Right ventricle myocardium inferior (tissue), 1 donor: ENCODE measurements at regions of chr16 and their contacts with region 1.

Region 1: GRCh38 chr16:56191156-56191815 is at the start of gene GNAO1:
- DNase-seq: peak; percentile 84
- ATAC-seq: peak; percentile 80
- total RNA-seq, gene GNAO1: 32.2 TPM

Region 2: GRCh38 chr16:56041686-56042085 is 149.6 kb before region 1 on chr16:
- intact Hi-C with region 1: loop called (anchors 2 kb)
- DNase-seq: peak; percentile 65
- ATAC-seq: peak; percentile 79

Region 3: DNA sequence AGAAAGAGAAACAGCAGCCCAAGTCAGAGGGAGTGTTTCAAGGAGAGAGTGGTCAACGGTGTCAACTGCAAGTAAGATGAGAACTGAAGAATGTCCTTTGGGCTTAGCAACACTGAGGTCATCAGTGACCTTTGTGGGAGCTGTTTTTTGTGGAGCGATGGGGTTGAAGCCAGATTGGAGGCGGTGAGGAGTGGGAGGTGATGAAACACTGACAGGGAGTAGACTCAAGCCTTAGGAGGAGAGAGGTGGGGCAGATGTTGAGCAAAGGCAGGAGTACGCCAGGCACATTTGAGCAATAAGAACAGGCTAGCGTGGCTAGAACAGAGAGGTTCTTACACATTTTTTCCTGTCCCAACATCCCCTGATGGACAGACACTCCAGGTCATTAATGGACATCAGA is 103.6 kb before region 1 on chr16:
- intact Hi-C with region 1: no loop called
- DNase-seq: no peak
- ATAC-seq: peak; percentile 87

Region 4: DNA sequence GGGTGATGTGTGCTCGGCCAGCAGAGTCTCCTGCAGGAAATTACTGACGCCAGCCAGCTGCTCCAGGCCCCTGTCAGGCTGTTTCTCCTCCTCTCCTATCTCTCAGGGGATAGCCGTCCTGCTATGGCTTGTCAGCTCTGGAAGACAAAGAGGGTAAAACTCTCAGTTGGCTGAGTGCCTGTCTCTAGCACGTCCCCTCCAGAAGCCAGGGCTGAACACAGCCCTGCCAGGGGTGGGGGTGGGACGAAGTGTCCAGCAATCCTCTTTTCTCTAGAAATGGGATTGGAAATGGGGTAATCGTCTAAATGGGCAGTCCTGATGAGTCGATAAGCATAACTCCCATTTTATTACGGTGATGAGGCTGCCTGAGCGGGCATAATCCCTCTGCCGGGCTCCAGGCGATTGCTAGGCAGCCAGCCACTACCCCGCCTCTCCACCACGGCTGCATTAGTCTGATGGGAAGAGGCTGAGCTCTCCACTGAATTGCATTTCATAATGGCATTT is 89.1 kb before region 1 on chr16:
- intact Hi-C with region 1: loop called (anchors 5 kb)
- DNase-seq: peak; percentile 77
- ATAC-seq: peak; percentile 94

Region 5: GRCh38 chr16:56163938-56164337 is 27.3 kb before region 1 on chr16:
- intact Hi-C with region 1: loop called (anchors 2 kb)
- DNase-seq: no peak
- ATAC-seq: no peak

Region 6: GRCh38 chr16:56237451-56237930 is 46.2 kb after region 1 on chr16:
- intact Hi-C with region 1: loop called (anchors 5 kb)
- DNase-seq: no peak
- ATAC-seq: peak; percentile 68

Region 7: DNA sequence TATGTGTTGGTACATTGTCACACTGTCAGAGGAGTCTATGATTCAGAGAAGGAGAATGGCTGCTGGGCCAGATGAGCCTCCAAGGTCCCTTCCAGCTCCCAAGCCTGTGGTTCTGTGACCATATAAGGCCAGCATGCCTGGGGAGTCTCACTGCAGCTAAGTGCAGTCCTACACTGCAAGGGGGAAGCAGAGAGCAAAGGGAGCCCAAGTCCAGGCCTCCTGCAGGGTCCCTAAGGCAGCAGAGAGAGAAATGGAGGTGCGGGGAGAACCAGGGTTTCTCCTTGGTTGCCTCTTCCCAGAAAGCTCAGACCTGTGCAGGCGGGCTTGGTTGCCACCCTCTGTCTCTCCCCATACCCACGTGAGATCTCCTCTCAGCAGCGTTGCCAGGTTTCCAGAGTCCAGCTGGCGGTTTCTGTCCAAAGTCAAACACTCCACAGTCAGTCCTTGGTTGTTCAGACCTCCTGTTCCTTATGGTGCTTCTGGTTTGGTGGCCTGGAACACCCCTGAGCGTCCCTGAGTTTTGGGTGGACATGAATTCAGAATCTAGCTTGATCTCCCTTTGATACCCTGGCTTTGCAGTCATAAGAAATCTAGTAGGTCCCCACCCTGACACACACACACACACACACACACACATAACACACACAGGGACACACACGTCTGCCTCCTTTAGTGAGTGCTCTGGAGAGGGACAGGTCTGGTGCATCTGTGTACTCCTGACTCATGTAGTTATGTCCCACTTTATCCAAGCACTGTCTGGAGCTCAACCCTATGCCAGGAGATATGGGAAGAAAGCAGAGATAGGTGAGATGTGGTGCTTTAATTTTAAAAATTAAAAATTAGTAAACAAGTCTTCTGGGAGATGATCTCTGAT is 78.8 kb after region 1 on chr16:
- intact Hi-C with region 1: loop called (anchors 5 kb)
- DNase-seq: no peak
- ATAC-seq: peak; percentile 90

Region 8: DNA sequence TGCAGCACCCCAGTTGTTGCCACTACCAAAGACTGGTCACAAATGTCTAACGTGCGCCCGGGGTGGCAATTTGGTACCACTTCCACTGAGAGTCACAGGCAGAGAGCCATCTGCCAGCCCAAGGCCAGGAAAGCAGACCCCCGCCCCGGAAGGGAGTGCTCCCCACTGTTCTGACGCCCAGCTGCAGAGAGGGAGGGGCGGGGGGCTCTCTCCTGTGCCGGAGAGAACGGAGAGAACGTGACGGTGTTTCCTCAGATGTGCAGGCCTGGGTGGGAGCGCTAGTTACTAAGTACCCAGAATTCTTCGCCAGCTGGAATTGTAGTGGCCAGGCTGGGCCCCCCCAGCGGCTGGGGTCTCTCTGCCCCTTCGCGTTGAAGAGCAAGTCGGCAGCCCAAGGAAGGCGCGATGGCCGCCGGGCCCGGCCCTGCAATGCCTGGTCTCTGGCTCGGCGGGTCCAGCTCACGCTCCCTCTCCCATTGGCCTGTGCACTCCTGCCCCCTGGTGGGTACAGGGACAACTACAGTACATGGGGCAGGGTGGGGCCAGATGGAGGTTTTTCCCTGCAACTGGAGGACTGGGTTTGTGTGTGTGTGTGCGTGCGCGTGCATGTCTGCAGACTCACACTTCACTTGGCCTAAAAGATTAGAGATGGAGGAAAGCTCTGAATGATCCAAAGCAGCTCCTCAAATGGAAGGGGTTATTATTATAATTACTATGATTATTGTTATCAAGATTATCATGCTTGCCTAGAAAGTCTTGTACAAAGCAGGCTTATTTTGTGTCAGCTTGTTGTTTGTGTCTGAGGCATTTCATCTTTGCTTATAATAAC is 126.9 kb after region 1 on chr16:
- intact Hi-C with region 1: loop called (anchors 5 kb)
- DNase-seq: peak; percentile 91
- ATAC-seq: peak; percentile 98